SK-N-SH (cell line): ENCODE measurements at regions of chr1 and their contacts with region 1.

Region 1: GRCh38 chr1:8727809-8728213 is 89.6 kb downstream of the RERE start:
- DNase-seq: peak; percentile 70
- H3K4me3 ChIP-seq: no peak overlapping the region
- H3K27ac ChIP-seq: peak overlapping the region in 1 of 2 experiments; percentile 56; a peak in 1 of 4 replicates
- H3K4me1 ChIP-seq: peaks cover 0 to 4% of the 10 kb centered on the region in 2 experiments; a peak in 2 of 4 replicates
- H3K27me3 ChIP-seq: no peaks in the 10 kb centered on the region
- CTCF ChIP-seq: no peak
- EP300 ChIP-seq: peak in 1 of 2 experiments; percentile 64; a peak in 1 of 4 replicates
- RAD21 ChIP-seq: peak; percentile 41; the same call in 1 of the 2 replicates

Region 2: DNA sequence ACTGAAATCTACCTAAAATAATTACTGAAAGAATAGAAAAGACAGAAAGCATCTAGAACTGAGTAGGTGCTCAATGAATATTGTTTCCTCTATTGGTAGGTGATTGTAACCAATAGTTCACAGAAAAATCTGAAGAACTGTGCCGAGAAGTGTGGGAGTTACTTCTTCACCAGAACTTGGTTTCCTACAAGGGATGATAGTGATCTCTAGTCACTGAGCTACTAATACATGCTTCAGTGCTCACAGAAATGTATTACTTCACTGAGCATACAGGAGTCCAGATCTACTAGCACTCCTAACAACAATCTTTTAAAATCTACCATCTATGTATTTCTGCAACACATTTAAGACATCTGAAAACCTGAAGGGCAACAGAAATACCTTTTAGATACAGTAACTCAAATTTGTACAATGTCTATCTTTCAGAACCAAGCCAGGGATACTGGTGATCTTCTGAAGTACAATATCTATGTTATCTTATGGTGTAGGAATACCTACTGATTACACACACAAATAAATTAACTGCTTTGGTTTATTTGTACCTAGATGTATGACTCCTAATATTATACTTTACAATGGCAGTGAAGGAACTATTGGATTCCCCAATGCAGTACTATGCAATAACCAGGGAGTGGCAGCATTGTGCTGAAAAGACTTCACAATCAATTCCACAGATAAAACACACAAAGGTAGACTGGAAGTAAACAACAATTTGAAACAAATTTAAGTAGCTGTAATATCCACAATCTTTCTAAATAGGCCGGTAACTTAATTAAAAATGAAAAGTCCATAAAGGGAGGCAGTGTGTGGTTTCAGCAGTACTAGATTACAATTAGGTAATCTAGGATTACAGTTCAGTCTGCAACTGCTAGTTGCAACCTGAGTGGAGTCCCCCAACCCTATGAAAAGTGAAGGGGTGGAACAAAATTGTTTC is 166.9 kb before region 1 on chr1:
- CTCF ChIA-PET with region 1: interaction called, 50 read pairs
- POLR2A ChIA-PET with region 1: no interaction called
- DNase-seq: peak; percentile 38
- H3K4me3 ChIP-seq: no peak overlapping the region; a peak in 1 of 4 replicates
- H3K27ac ChIP-seq: peak overlapping the region in 1 of 2 experiments; percentile 16; a peak in 1 of 4 replicates
- H3K4me1 ChIP-seq: peaks cover 11 to 38% of the 10 kb centered on the region in 2 experiments
- H3K27me3 ChIP-seq: no peaks in the 10 kb centered on the region
- CTCF ChIP-seq: peak; percentile 90
- EP300 ChIP-seq: no peak
- RAD21 ChIP-seq: peak; percentile 92

Region 3: GRCh38 chr1:8671306-8671917 is 56.4 kb before region 1 on chr1:
- CTCF ChIA-PET with region 1: interaction called, 17 read pairs
- POLR2A ChIA-PET with region 1: no interaction called
- DNase-seq: peak; percentile 60
- H3K4me3 ChIP-seq: no peak overlapping the region
- H3K27ac ChIP-seq: no peak overlapping the region; a peak in 1 of 4 replicates
- H3K4me1 ChIP-seq: peaks cover 30 to 52% of the 10 kb centered on the region in 2 experiments
- H3K27me3 ChIP-seq: no peaks in the 10 kb centered on the region
- CTCF ChIP-seq: peak; percentile 81
- EP300 ChIP-seq: no peak
- RAD21 ChIP-seq: peak; percentile 84

Region 4: DNA sequence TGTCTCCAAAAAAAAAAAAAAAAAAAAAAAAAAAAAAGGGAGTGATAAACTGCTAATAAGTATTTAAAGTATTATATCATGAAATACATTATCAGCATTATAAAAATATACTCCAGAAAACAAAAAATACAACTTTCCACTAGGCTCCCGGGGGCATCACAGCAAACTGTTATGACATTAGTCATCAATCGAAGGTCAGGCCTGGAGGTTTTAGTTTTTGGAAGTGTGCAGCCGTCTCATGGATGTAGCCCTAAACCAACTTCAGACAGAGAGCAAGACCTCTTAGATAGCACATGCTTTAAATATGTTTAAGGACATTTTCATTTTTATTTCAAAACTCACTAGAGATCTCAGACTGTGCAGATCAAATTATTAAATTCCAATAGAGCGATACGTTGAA is 16.7 kb before region 1 on chr1:
- CTCF ChIA-PET with region 1: interaction called, 39 read pairs
- POLR2A ChIA-PET with region 1: no interaction called
- DNase-seq: no peak
- H3K4me3 ChIP-seq: no peak overlapping the region
- H3K27ac ChIP-seq: peak overlapping the region; percentile 37 to 89; a peak in 3 of 4 replicates
- H3K4me1 ChIP-seq: peaks cover 33 to 39% of the 10 kb centered on the region in 2 experiments; a peak in 3 of 4 replicates
- H3K27me3 ChIP-seq: no peaks in the 10 kb centered on the region
- CTCF ChIP-seq: no peak
- EP300 ChIP-seq: no peak
- RAD21 ChIP-seq: no peak

Region 5: DNA sequence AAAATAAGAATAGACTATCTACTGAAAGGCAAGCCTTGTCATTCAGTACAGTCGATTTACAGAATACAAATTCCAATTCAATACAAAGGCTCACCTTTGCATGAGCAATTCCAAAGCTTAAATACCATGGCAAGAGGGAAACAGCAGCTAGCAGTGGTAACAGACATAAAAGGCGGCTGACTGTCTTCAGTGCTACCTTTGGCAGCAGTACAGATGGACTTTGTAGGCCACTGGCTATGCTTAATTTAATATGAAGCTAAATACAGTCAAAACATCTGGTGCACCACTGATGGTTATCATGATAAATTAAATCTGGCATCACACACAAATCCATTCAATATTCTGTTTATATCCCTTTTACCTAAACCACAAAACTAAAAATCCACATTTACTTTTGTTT is 27.2 kb after region 1 on chr1:
- CTCF ChIA-PET with region 1: interaction called, 12 read pairs
- POLR2A ChIA-PET with region 1: no interaction called
- DNase-seq: peak; percentile 70
- H3K4me3 ChIP-seq: no peak overlapping the region
- H3K27ac ChIP-seq: peak overlapping the region in 1 of 2 experiments; percentile 98; a peak in 2 of 4 replicates
- H3K4me1 ChIP-seq: peaks cover 16 to 27% of the 10 kb centered on the region in 2 experiments; a peak in 3 of 4 replicates
- H3K27me3 ChIP-seq: no peaks in the 10 kb centered on the region
- CTCF ChIP-seq: no peak
- EP300 ChIP-seq: peak in 1 of 2 experiments; percentile 97; a peak in 2 of 4 replicates
- RAD21 ChIP-seq: no peak; the same call in 1 of the 2 replicates